CD4-positive, alpha-beta memory T cell (primary cell): ENCODE measurements at regions of chr1 and their contacts with region 1.

Region 1: DNA sequence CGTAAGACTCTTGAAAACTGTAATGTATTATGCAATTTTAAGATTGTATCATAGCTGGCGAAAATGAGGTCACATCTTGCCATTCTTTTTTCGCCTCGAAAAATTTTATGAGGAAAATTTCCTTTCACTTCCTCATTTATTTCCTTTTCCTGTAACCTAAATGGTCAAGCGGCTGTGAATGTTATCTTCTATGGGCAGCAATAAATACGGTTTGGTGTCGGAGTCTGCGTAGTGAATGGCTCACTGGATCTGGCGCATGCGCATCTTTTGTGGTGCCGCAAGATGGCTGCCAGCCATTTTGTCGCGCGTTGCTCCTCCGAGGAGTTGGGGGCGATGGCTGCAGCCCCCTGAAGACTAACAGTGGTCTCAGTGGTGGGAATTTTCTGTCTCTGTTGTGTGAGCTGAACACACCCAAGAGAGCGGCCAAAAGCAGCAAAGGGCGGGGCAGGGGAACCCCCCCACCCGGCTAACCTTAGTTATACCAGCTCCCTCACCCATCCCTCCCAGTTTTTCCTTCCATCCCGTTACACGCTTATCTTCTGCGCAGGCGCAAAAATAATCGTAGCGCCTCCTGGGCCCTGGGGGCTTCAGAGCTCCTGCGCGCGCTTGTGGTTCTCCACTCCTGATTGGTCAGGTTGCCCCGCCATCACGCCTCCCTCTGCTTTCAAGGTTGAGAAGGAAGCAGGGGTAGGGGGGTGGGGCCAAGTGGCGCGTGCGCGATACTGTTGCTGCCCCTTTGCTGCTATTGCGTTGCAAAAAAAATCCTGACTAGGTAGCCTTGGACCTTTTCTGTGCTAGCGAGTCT is at the start of gene RPRD2:
- DNase-seq: peak; percentile 99 to 100 (median 99)
- H3K4me3 ChIP-seq: peak within 1 kb of the TSS; percentile 98 to 100
- H3K4me3 Mint-ChIP-seq: peak within 1 kb of the TSS; percentile 94 to 100 (median 99)
- H3K27ac ChIP-seq: peak within 1 kb of the TSS; percentile 96
- H3K27ac Mint-ChIP-seq: peak within 1 kb of the TSS; percentile 97 to 100 (median 99)
- H3K4me1 ChIP-seq: peaks cover 27% of the 10 kb centered on the region
- H3K4me1 Mint-ChIP-seq: peaks cover 22 to 49% (median 28%) of the 10 kb centered on the region in 4 donors
- H3K27me3 ChIP-seq: no peaks in the 10 kb centered on the region
- H3K27me3 Mint-ChIP-seq: no peaks in the 10 kb centered on the region
- total RNA-seq, gene RPRD2: 60.0 to 61.0 TPM

Region 2: GRCh38 chr1:150281837-150282653 is 81.6 kb before region 1 on chr1 and contains the start of gene CIART:
- CTCF ChIA-PET with region 1: no interaction called
- POLR2A ChIA-PET with region 1: interaction called, 17 read pairs
- intact Hi-C with region 1: no loop called
- DNase-seq: peak; percentile 81 to 89 (median 88)
- H3K4me3 ChIP-seq: peak within 1 kb of the TSS; percentile 61 to 80
- H3K4me3 Mint-ChIP-seq: peak within 1 kb of the TSS; percentile 83 to 97 (median 89)
- H3K27ac ChIP-seq: peak within 1 kb of the TSS; percentile 57
- H3K27ac Mint-ChIP-seq: peak within 1 kb of the TSS; percentile 87 to 98 (median 96)
- H3K4me1 ChIP-seq: peaks cover 23% of the 10 kb centered on the region
- H3K4me1 Mint-ChIP-seq: peaks cover 15 to 27% (median 24%) of the 10 kb centered on the region in 4 donors
- H3K27me3 ChIP-seq: no peaks in the 10 kb centered on the region
- H3K27me3 Mint-ChIP-seq: no peaks in the 10 kb centered on the region
- total RNA-seq, gene CIART: 0.67 to 0.94 TPM

Region 3: GRCh38 chr1:150332651-150333290 is 30.9 kb before region 1 on chr1:
- CTCF ChIA-PET with region 1: no interaction called
- POLR2A ChIA-PET with region 1: interaction called, 11 read pairs
- intact Hi-C with region 1: no loop called
- DNase-seq: no peak
- H3K4me3 ChIP-seq: no peak overlapping the region
- H3K4me3 Mint-ChIP-seq: peak overlapping the region in 1 of 8 donors; percentile 7
- H3K27ac ChIP-seq: no peak overlapping the region
- H3K27ac Mint-ChIP-seq: no peak overlapping the region
- H3K4me1 ChIP-seq: no peaks in the 10 kb centered on the region
- H3K4me1 Mint-ChIP-seq: peaks cover 5 to 12% (median 7%) of the 10 kb centered on the region in 4 donors
- H3K27me3 ChIP-seq: no peaks in the 10 kb centered on the region
- H3K27me3 Mint-ChIP-seq: no peaks in the 10 kb centered on the region

Region 4: GRCh38 chr1:150420560-150421265 is 57.1 kb after region 1 on chr1:
- CTCF ChIA-PET with region 1: no interaction called
- POLR2A ChIA-PET with region 1: no interaction called
- intact Hi-C with region 1: loop called (anchors 5 kb)
- DNase-seq: no peak
- H3K4me3 ChIP-seq: no peak overlapping the region
- H3K4me3 Mint-ChIP-seq: no peak overlapping the region
- H3K27ac ChIP-seq: no peak overlapping the region
- H3K27ac Mint-ChIP-seq: peak overlapping the region in 1 of 7 donors; percentile 18
- H3K4me1 ChIP-seq: peaks cover 2% of the 10 kb centered on the region
- H3K4me1 Mint-ChIP-seq: peaks cover 9 to 26% (median 16%) of the 10 kb centered on the region in 4 donors
- H3K27me3 ChIP-seq: no peaks in the 10 kb centered on the region
- H3K27me3 Mint-ChIP-seq: no peaks in the 10 kb centered on the region

Region 5: GRCh38 chr1:150629115-150629928 is 265.7 kb after region 1 on chr1 and contains the start of gene ENSA:
- CTCF ChIA-PET with region 1: no interaction called
- POLR2A ChIA-PET with region 1: interaction called, 18 read pairs
- intact Hi-C with region 1: loop called (anchors 2 kb)
- DNase-seq: peak; percentile 98 to 99 (median 98)
- H3K4me3 ChIP-seq: peak within 1 kb of the TSS; percentile 78 to 80
- H3K4me3 Mint-ChIP-seq: no peak within 1 kb of the TSS
- H3K27ac ChIP-seq: peak within 1 kb of the TSS; percentile 98
- H3K27ac Mint-ChIP-seq: no peak within 1 kb of the TSS
- H3K4me1 ChIP-seq: peaks cover 29% of the 10 kb centered on the region
- H3K4me1 Mint-ChIP-seq: peaks cover 18 to 21% (median 21%) of the 10 kb centered on the region in 4 donors
- H3K27me3 ChIP-seq: no peaks in the 10 kb centered on the region
- H3K27me3 Mint-ChIP-seq: no peaks in the 10 kb centered on the region
- total RNA-seq, gene ENSA: 99.7 to 101 TPM

Region 6: GRCh38 chr1:151008190-151008860 is 644.7 kb after region 1 on chr1 and contains the start of gene PRUNE1:
- CTCF ChIA-PET with region 1: no interaction called
- POLR2A ChIA-PET with region 1: interaction called, 4 read pairs
- intact Hi-C with region 1: loop called (anchors 5 kb)
- DNase-seq: peak; percentile 92 to 99 (median 96)
- H3K4me3 ChIP-seq: peak within 1 kb of the TSS; percentile 74 to 92
- H3K4me3 Mint-ChIP-seq: peak within 1 kb of the TSS; percentile 88 to 99 (median 95)
- H3K27ac ChIP-seq: peak within 1 kb of the TSS; percentile 88
- H3K27ac Mint-ChIP-seq: peak within 1 kb of the TSS; percentile 90 to 100 (median 99)
- H3K4me1 ChIP-seq: peaks cover 67% of the 10 kb centered on the region
- H3K4me1 Mint-ChIP-seq: peaks cover 47 to 93% (median 69%) of the 10 kb centered on the region in 4 donors
- H3K27me3 ChIP-seq: no peaks in the 10 kb centered on the region
- H3K27me3 Mint-ChIP-seq: no peaks in the 10 kb centered on the region
- total RNA-seq, gene PRUNE1: 35.0 to 38.9 TPM